ENCODE measurements at regions of chr5 and their contacts with region 1.

Region 1: DNA sequence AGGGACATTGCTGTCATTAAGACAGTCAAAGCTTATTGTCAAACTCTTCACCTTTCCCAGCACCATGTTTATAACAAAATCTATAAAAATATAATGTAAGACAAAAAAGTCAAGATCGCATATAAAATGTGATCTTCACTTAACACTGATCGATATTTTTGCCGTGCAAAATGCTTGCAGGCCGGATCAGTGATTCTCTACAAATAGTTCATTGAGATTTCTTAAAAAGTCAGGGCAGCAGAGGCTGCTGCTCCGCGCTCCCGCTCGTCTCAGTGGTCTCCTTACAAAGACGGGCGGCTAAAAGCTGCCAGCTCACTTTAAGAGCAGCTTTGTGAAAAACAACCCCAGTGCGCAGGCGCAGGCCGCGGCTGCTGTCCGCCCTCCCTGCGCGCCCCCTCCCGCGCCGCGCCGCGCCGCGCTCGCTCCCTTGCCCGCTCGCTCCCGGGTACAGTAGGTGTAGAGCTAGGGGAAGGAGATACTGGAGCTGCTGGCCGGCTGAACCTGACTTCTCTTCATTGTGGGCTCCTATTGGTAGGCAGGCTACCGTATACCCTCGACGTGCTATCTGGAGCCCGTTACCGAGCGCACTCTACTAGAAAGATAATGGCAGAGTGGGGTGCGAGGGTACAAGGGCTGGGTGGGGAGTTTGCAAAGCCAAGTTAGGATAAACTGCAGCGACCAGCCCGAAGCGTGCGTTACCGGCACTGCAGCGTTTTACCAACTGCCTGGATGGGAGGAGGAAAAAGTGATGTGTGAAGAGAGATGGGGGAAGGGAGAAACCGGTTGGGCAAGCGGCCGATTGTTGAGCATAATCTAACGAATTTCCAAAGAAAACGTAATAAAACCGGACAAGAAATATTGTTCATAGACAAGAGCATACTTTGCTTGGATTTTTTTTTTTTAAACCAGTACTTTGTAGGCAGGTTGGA is at the start of gene ARRDC3:
- DNase-seq: peak; percentile 96 to 99 (median 99)
- ATAC-seq: peak; percentile 84 to 87
- H3K4me3 ChIP-seq: peak within 1 kb of the TSS; percentile 87
- H3K27ac ChIP-seq: peak within 1 kb of the TSS; percentile 82
- H3K4me1 ChIP-seq: no peaks in the 10 kb centered on the region
- H3K27me3 ChIP-seq: no peaks in the 10 kb centered on the region
- total RNA-seq, gene ARRDC3: 20.1 to 28.9 (median 25.5) TPM

Region 2: GRCh38 chr5:90932052-90932699 is 451.1 kb before region 1 on chr5:
- intact Hi-C with region 1: loop called in 3 of 4 experiments (anchors 10 kb)
- DNase-seq: peak in 1 of 3 donors; percentile 20
- ATAC-seq: peak; percentile 72 to 76
- H3K4me3 ChIP-seq: no peak overlapping the region
- H3K27ac ChIP-seq: no peak overlapping the region
- H3K4me1 ChIP-seq: no peaks in the 10 kb centered on the region
- H3K27me3 ChIP-seq: no peaks in the 10 kb centered on the region

Region 3: DNA sequence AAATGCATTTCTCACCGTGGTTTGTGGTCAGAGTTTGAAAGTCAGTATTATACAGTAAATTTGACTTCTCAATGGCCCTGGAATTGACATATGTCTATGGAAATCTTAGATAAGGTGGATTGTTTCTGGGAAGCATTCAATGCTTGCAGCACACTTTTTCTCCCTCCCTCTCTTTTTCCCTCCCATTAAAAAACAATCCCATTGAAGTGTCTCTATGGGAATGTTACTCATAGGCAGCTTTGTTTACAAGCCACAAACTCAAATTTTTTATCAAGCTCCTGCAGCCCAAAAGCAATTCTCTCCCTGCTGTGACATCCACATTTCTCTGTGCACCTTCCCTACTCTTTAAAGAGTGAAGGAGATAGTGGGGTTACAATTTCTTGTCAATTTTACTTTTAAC is 292.3 kb before region 1 on chr5:
- intact Hi-C with region 1: no loop called
- DNase-seq: no peak
- ATAC-seq: no peak
- H3K4me3 ChIP-seq: no peak overlapping the region
- H3K27ac ChIP-seq: no peak overlapping the region
- H3K4me1 ChIP-seq: no peaks in the 10 kb centered on the region
- H3K27me3 ChIP-seq: no peaks in the 10 kb centered on the region

Region 4: GRCh38 chr5:91110686-91111085 is 272.6 kb before region 1 on chr5:
- intact Hi-C with region 1: loop called in 1 of 4 experiments (anchors 5 kb)
- DNase-seq: no peak
- ATAC-seq: peak; percentile 78 to 81
- H3K4me3 ChIP-seq: no peak overlapping the region
- H3K27ac ChIP-seq: peak overlapping the region; percentile 12
- H3K4me1 ChIP-seq: no peaks in the 10 kb centered on the region
- H3K27me3 ChIP-seq: no peaks in the 10 kb centered on the region

Region 5: DNA sequence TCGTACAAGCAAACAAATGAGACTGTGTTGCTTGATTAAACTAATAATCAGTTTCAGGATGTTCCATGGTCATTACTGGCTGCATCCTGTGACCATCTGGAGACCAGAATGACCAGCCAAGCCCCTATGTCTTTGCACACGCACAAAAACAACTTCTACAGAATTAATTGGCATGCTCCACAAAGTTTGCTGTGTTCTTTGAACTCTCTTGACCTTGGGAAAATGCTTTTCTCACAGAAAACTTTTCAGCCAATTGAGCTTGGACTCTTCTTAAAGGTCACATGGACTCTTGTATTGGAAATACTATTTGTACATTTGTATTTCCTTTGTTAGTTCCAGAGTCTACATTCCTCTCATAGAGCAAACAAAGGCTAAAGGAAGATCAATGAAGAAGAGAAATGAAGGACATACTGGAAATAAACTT is 148.0 kb before region 1 on chr5:
- intact Hi-C with region 1: loop called in 1 of 4 experiments (anchors 10 kb)
- DNase-seq: no peak
- ATAC-seq: peak; percentile 18 to 77
- H3K4me3 ChIP-seq: no peak overlapping the region
- H3K27ac ChIP-seq: no peak overlapping the region
- H3K4me1 ChIP-seq: no peaks in the 10 kb centered on the region
- H3K27me3 ChIP-seq: no peaks in the 10 kb centered on the region

Region 6: DNA sequence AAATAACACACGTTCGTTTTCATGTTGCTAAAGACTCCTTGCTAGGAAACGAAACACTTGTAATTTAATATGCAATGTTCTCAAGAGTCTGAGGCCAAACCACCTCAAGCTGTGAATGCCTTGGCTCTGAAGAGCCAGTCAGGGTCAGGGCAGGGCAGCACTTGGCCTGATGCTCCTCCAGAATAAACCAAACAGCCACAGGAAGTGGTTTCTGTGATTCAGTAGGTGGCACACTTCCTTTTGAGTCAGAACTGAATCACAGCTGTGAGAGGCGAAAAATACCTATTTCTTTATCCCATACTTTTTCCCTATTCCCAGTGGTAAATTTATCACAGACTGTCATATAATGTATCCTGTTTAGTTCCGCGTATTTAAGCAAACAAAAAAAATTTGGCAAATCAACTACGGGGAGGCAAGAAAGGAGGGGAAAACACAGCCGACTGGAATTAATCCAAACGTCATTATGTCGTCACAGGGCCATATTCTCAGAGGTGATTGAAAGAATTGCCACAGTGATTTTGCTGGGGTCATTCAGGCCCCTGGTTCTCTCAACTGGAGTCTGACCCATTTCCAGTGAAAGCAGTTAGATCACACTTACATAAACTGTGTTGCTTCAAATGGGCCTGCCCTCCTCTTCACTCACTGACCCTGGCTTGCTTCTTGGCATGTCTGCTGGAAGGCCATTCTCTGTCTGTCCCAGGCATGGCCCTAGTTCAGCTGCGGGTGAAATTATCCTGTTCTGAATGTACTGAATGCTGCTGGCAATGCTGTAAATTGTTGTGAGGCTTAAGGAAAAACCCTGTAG is 71.4 kb before region 1 on chr5:
- intact Hi-C with region 1: loop called in 2 of 4 experiments (anchors 5 kb)
- DNase-seq: peak; percentile 81 to 87 (median 82)
- ATAC-seq: peak; percentile 87 to 88
- H3K4me3 ChIP-seq: no peak overlapping the region
- H3K27ac ChIP-seq: peak overlapping the region; percentile 97
- H3K4me1 ChIP-seq: peaks cover 4% of the 10 kb centered on the region
- H3K27me3 ChIP-seq: no peaks in the 10 kb centered on the region

Region 7: DNA sequence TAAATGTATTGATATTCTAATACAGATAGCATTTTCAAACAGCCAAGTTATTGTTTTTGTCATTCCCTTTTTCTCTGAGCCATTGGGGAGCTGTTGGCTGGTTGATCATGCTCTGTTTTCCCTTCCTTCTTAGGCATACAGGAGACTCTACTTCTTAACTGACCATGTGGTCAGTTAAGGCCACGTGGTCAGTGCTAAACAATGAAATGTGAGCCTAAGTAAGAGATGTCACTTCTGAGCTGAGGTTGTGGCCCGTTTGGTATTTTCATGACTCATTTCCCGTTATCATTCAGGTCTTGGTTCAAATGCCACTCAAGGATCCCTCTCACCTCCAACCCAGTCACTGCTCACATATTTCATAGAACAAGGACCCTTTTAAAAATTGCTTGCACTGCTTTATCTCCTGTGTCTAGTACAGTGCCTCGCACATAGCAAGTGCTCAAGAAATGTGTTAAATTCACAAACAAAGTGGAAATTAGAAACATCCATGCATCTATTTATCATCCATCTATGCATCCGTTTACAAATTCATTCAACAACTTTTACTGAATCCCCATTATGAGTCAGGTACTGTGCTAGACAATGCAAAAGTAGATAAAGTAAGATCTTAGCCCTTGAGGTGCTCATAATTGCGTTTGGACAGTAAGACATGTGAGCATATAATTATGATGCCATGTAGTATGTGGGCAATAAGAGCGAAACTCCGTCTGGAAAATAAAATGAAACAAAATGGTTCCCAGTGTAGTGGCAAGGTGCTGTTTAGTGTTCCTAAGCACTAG is 50.8 kb before region 1 on chr5:
- intact Hi-C with region 1: no loop called
- DNase-seq: no peak
- ATAC-seq: peak in 1 of 2 donors; percentile 46
- H3K4me3 ChIP-seq: no peak overlapping the region
- H3K27ac ChIP-seq: no peak overlapping the region
- H3K4me1 ChIP-seq: no peaks in the 10 kb centered on the region
- H3K27me3 ChIP-seq: no peaks in the 10 kb centered on the region

Region 8: GRCh38 chr5:91345461-91345860 is 37.8 kb before region 1 on chr5:
- intact Hi-C with region 1: no loop called
- DNase-seq: no peak
- ATAC-seq: no peak
- H3K4me3 ChIP-seq: no peak overlapping the region
- H3K27ac ChIP-seq: no peak overlapping the region
- H3K4me1 ChIP-seq: no peaks in the 10 kb centered on the region
- H3K27me3 ChIP-seq: no peaks in the 10 kb centered on the region

Region 9: GRCh38 chr5:91794856-91795548 is 411.7 kb after region 1 on chr5:
- intact Hi-C with region 1: no loop called
- DNase-seq: no peak
- ATAC-seq: no peak
- H3K4me3 ChIP-seq: no peak overlapping the region
- H3K27ac ChIP-seq: no peak overlapping the region
- H3K4me1 ChIP-seq: no peaks in the 10 kb centered on the region
- H3K27me3 ChIP-seq: no peaks in the 10 kb centered on the region

Measured in right cardiac atrium (tissue), 5 donors.